Dendritic cell treated with granulocyte-macrophage colony-stimulating factor and Interleukin-4, amounts not matched to agents 40 ng/mL and 50 ng/mL, for 4 days (primary cell): ENCODE measurements at regions of chr9 and their contacts with region 1.

Region 1: DNA sequence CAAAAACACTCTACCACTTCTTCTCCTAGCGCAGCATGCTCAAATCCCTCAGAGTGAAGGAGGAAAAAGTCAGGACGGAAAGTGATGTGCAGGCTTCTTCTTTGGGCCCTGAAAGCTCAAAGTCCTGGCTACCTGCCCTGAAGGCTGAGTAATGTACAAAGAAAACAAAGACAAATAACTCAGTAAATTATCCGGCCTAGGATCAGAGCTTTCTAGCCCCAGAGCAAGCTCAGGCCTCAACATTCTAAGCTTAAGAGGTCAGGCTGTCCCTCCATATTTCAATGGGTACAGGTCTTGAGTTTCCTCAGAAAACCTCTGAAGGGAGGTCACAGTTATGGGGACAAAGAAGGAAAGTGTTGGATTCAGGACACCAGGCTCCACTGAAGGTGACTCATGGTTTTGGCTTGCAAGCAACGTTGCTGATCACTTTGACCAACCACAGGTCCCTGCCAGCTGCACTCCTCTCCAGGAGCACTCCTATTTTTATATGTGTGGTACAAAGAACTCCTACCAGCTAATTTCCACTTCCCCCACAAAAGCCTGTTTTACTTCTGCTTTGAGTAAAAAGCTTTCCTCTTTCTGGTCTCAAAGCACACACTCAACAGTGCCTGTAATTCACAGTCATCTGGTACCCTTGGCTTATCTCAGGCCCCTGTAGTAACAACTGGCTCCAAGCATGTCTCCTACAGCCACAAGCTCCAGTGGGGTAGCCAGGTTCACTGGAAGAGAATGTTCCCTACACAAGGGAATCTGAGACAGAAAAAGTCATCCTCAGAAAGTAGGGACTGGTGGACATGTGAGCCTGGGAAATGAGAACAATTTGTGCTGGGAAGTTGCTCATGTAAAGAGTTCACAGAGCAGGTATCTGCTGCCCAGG is 115.7 kb downstream of the UGCG start:
- H3K4me3 Mint-ChIP-seq: no peak overlapping the region
- H3K27ac Mint-ChIP-seq: peak overlapping the region; percentile 87
- H3K4me1 Mint-ChIP-seq: peaks cover 68% of the 10 kb centered on the region
- H3K27me3 Mint-ChIP-seq: no peaks in the 10 kb centered on the region

Region 2: GRCh38 chr9:111937781-111938426 is 74.4 kb before region 1 on chr9:
- intact Hi-C with region 1: loop called (anchors 5 kb)
- H3K4me3 Mint-ChIP-seq: peak overlapping the region; percentile 30
- H3K27ac Mint-ChIP-seq: peak overlapping the region; percentile 65
- H3K4me1 Mint-ChIP-seq: peaks cover 25% of the 10 kb centered on the region
- H3K27me3 Mint-ChIP-seq: no peaks in the 10 kb centered on the region

Region 3: GRCh38 chr9:111957856-111958652 is 54.2 kb before region 1 on chr9:
- intact Hi-C with region 1: loop called (anchors 5 kb)
- H3K4me3 Mint-ChIP-seq: peak overlapping the region; percentile 20
- H3K27ac Mint-ChIP-seq: peak overlapping the region; percentile 83
- H3K4me1 Mint-ChIP-seq: peaks cover 47% of the 10 kb centered on the region
- H3K27me3 Mint-ChIP-seq: peaks cover 20% of the 10 kb centered on the region

Region 4: GRCh38 chr9:112061152-112061740 is 49.0 kb after region 1 on chr9:
- intact Hi-C with region 1: loop called (anchors 2 kb)
- H3K4me3 Mint-ChIP-seq: no peak overlapping the region
- H3K27ac Mint-ChIP-seq: peak overlapping the region; percentile 82
- H3K4me1 Mint-ChIP-seq: peaks cover 82% of the 10 kb centered on the region
- H3K27me3 Mint-ChIP-seq: no peaks in the 10 kb centered on the region